Calu3 (cell line): ENCODE measurements at regions of chr1 and their contacts with region 1.

Region 1: GRCh38 chr1:77143529-77144121 is 75.6 kb downstream of the PIGK start:
- DNase-seq: no peak
- H3K4me3 Mint-ChIP-seq: no peak overlapping the region
- H3K27ac Mint-ChIP-seq: no peak overlapping the region
- H3K4me1 Mint-ChIP-seq: no peaks in the 10 kb centered on the region
- H3K27me3 Mint-ChIP-seq: no peaks in the 10 kb centered on the region
- CTCF ChIP-seq: peak; percentile 44

Region 2: GRCh38 chr1:75991497-75992114 is 1152.0 kb before region 1 on chr1:
- CTCF ChIA-PET with region 1: no interaction called
- intact Hi-C with region 1: loop called (anchors 5 kb)
- DNase-seq: peak; percentile 89
- H3K4me3 Mint-ChIP-seq: no peak overlapping the region
- H3K27ac Mint-ChIP-seq: no peak overlapping the region
- H3K4me1 Mint-ChIP-seq: no peaks in the 10 kb centered on the region
- H3K27me3 Mint-ChIP-seq: peaks cover 12% of the 10 kb centered on the region
- CTCF ChIP-seq: peak; percentile 57

Region 3: GRCh38 chr1:76949503-76949902 is 194.1 kb before region 1 on chr1:
- CTCF ChIA-PET with region 1: no interaction called
- intact Hi-C with region 1: no loop called
- DNase-seq: no peak
- H3K4me3 Mint-ChIP-seq: no peak overlapping the region
- H3K27ac Mint-ChIP-seq: no peak overlapping the region
- H3K4me1 Mint-ChIP-seq: no peaks in the 10 kb centered on the region
- H3K27me3 Mint-ChIP-seq: no peaks in the 10 kb centered on the region
- CTCF ChIP-seq: no peak

Region 4: GRCh38 chr1:77313491-77313890 is 169.9 kb after region 1 on chr1:
- CTCF ChIA-PET with region 1: no interaction called
- intact Hi-C with region 1: loop called (anchors 2 kb)
- DNase-seq: peak; percentile 56
- H3K4me3 Mint-ChIP-seq: peak overlapping the region; percentile 4
- H3K27ac Mint-ChIP-seq: no peak overlapping the region
- H3K4me1 Mint-ChIP-seq: no peaks in the 10 kb centered on the region
- H3K27me3 Mint-ChIP-seq: no peaks in the 10 kb centered on the region
- CTCF ChIP-seq: peak; percentile 71

Region 5: GRCh38 chr1:77468257-77468948 is 324.8 kb after region 1 on chr1:
- CTCF ChIA-PET with region 1: no interaction called
- intact Hi-C with region 1: no loop called
- DNase-seq: no peak
- H3K4me3 Mint-ChIP-seq: no peak overlapping the region
- H3K27ac Mint-ChIP-seq: no peak overlapping the region
- H3K4me1 Mint-ChIP-seq: no peaks in the 10 kb centered on the region
- H3K27me3 Mint-ChIP-seq: peaks cover 19% of the 10 kb centered on the region
- CTCF ChIP-seq: no peak

Region 6: GRCh38 chr1:77533660-77534305 is 390.2 kb after region 1 on chr1:
- CTCF ChIA-PET with region 1: no interaction called
- intact Hi-C with region 1: loop called (anchors 1 kb)
- DNase-seq: peak; percentile 68
- H3K4me3 Mint-ChIP-seq: no peak overlapping the region
- H3K27ac Mint-ChIP-seq: peak overlapping the region; percentile 9
- H3K4me1 Mint-ChIP-seq: peaks cover 20% of the 10 kb centered on the region
- H3K27me3 Mint-ChIP-seq: no peaks in the 10 kb centered on the region
- CTCF ChIP-seq: peak; percentile 77